Right lobe of liver (tissue), 6 donors: ENCODE measurements at regions of chr12 and their contacts with region 1.

Region 1: GRCh38 chr12:111753144-111753881 is 13.4 kb upstream of the ALDH2 start:
- DNase-seq: peak; percentile 70 to 79 (median 79)
- ATAC-seq: peak; percentile 88 to 94 (median 92)
- H3K4me3 ChIP-seq: no peak overlapping the region
- H3K27ac ChIP-seq: no peak overlapping the region
- H3K4me1 ChIP-seq: peaks cover 0 to 38% (median 15%) of the 10 kb centered on the region in 4 donors
- H3K27me3 ChIP-seq: no peaks in the 10 kb centered on the region
- CTCF ChIP-seq: peak; percentile 87 to 93 (median 91)
- POLR2A ChIP-seq: no peak

Region 2: GRCh38 chr12:111812881-111813741 is 59.8 kb after region 1 on chr12:
- intact Hi-C with region 1: loop called in 1 of 2 experiments (anchors 10 kb)
- DNase-seq: peak in 2 of 3 donors; percentile 68 to 74
- ATAC-seq: peak; percentile 88 to 98 (median 96)
- H3K4me3 ChIP-seq: no peak overlapping the region
- H3K27ac ChIP-seq: no peak overlapping the region
- H3K4me1 ChIP-seq: no peaks in the 10 kb centered on the region
- H3K27me3 ChIP-seq: no peaks in the 10 kb centered on the region
- CTCF ChIP-seq: peak; percentile 79 to 85 (median 82)
- POLR2A ChIP-seq: no peak